Mucosa of descending colon (tissue), 3 donors: ENCODE measurements at regions of chr12 and their contacts with region 1.

Region 1: GRCh38 chr12:71415336-71416231 is 24.0 kb upstream of the LGR5 start:
- DNase-seq: peak in 1 of 3 donors; percentile 66
- ATAC-seq: peak; percentile 72
- H3K4me3 ChIP-seq: no peak overlapping the region
- H3K4me1 ChIP-seq: no peaks in the 10 kb centered on the region
- CTCF ChIP-seq: peak; percentile 33

Region 2: GRCh38 chr12:71014180-71014785 is 401.3 kb before region 1 on chr12:
- intact Hi-C with region 1: no loop called
- DNase-seq: no peak
- ATAC-seq: peak; percentile 71
- H3K4me3 ChIP-seq: no peak overlapping the region
- H3K4me1 ChIP-seq: no peaks in the 10 kb centered on the region
- CTCF ChIP-seq: no peak

Region 3: DNA sequence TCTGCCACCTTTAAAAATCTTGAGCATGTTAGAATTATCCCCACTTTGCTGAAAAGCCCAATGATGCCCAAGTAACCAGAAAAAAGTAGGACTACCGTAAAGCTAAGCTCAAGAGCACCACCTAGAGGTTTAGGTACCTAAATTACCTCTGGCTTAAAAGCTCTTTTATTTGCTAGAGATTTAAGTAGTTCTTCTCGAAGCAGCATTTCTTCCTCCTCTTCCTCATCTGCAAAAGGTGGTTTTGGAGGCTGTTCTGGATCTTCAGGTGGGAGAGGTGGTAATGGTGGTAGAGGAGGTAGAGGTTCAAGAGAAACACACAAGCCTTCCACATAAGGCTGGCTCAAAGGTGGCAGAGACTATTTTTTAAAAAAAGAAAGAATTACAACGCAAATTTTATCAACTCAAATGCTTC is 221.1 kb after region 1 on chr12:
- intact Hi-C with region 1: loop called in 1 of 2 experiments (anchors 10 kb)
- DNase-seq: peak in 1 of 3 donors; percentile 32
- ATAC-seq: peak; percentile 73
- H3K4me3 ChIP-seq: no peak overlapping the region
- H3K4me1 ChIP-seq: no peaks in the 10 kb centered on the region
- CTCF ChIP-seq: no peak